Heart left ventricle (tissue), 16 donors: ENCODE measurements at regions of chr14 and their contacts with region 1.

Region 1: DNA sequence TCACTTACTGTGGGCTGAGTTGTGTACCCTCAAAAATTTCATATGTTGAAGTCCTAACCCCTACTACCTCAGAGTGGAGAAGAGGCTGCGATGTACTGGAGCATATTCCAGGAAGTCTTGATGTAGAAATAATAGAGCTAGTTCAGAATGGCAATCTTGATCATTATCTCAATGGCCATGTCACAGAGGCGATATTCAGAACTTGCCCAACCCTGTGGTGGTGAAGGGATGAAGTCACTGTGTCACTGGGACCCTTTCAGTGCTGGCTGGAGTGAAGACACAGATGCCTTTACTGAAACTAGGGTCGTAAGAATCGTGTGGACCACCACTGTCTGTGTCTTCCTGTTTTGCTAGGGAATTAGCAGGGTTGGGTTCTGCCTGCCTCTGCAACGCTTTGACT is 90.7 kb downstream of the FOXG1 start:
- DNase-seq: no peak
- ATAC-seq: no peak
- H3K4me3 ChIP-seq: no peak overlapping the region
- H3K27ac ChIP-seq: no peak overlapping the region
- H3K4me1 ChIP-seq: no peaks in the 10 kb centered on the region
- H3K27me3 ChIP-seq: no peaks in the 10 kb centered on the region
- CTCF ChIP-seq: no peak
- POLR2A ChIP-seq: no peak

Region 2: GRCh38 chr14:28911521-28911920 is 54.2 kb after region 1 on chr14:
- intact Hi-C with region 1: loop called in 1 of 10 experiments (anchors 10 kb)
- DNase-seq: no peak
- ATAC-seq: no peak
- H3K4me3 ChIP-seq: no peak overlapping the region
- H3K27ac ChIP-seq: no peak overlapping the region
- H3K4me1 ChIP-seq: no peaks in the 10 kb centered on the region
- H3K27me3 ChIP-seq: no peaks in the 10 kb centered on the region
- CTCF ChIP-seq: no peak
- POLR2A ChIP-seq: no peak

Region 3: GRCh38 chr14:28975084-28975483 is 117.8 kb after region 1 on chr14:
- intact Hi-C with region 1: no loop called
- DNase-seq: no peak
- ATAC-seq: no peak
- H3K4me3 ChIP-seq: no peak overlapping the region
- H3K27ac ChIP-seq: no peak overlapping the region
- H3K4me1 ChIP-seq: no peaks in the 10 kb centered on the region
- H3K27me3 ChIP-seq: no peaks in the 10 kb centered on the region
- CTCF ChIP-seq: no peak
- POLR2A ChIP-seq: no peak